HEK293 (cell line): ENCODE measurements at regions of chr3 and their contacts with region 1.

Region 1: DNA sequence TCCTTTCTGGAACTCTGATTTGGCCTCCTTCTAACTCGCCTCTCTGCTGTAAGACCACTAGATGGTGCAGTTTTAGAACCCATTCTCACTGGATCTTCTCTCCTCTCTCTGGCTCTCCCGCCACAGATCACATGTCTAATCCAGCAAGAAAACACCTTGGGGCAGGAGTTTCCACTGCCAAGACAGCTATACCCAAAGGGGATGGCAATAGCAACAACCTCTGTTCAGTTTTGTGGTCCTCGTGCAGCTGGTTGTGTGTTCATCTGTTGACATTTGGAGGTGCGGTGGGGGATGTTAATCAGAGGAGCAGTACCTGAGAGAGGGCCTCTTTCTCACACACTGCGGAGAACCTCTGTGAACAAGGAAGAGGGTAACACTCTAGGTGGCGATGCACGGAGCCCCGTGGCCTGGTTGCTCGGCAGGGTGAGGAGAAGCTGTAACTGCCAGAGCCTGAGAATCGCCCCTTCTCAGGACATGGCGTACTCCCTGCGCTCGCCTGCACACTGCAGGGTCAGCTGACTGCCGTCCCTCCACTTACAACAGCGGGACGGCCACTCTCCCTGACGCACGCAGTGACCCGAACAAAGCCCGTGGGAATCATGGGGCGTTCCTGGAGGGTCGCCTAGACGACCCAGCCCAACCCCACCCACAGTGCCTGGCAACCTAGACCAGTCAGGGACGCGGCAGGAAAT is at the start of gene TEX55:
- H3K4me3 ChIP-seq: no peak within 1 kb of the TSS
- H3K27ac ChIP-seq: no peak within 1 kb of the TSS
- H3K4me1 ChIP-seq: no peaks in the 10 kb centered on the region
- CTCF ChIP-seq: peak; percentile 37; the same call in 1 of the 2 replicates

Region 2: GRCh38 chr3:119240591-119241434 is 95.2 kb after region 1 on chr3 and contains the start of gene B4GALT4:
- CTCF ChIA-PET with region 1: interaction called, 11 read pairs
- POLR2A ChIA-PET with region 1: interaction called, 5 read pairs
- H3K4me3 ChIP-seq: peak within 1 kb of the TSS; percentile 76
- H3K27ac ChIP-seq: peak within 1 kb of the TSS; percentile 61
- H3K4me1 ChIP-seq: no peaks in the 10 kb centered on the region
- CTCF ChIP-seq: no peak